Posterior vena cava (tissue), 2 donors: ENCODE measurements at regions of chr4 and their contacts with region 1.

Region 1: GRCh38 chr4:34091451-34091850 is 2152.9 kb downstream of the ARAP2 start:
- DNase-seq: no peak

Region 2: GRCh38 chr4:34138385-34138784 is 46.9 kb after region 1 on chr4:
- intact Hi-C with region 1: no loop called
- DNase-seq: no peak

Region 3: DNA sequence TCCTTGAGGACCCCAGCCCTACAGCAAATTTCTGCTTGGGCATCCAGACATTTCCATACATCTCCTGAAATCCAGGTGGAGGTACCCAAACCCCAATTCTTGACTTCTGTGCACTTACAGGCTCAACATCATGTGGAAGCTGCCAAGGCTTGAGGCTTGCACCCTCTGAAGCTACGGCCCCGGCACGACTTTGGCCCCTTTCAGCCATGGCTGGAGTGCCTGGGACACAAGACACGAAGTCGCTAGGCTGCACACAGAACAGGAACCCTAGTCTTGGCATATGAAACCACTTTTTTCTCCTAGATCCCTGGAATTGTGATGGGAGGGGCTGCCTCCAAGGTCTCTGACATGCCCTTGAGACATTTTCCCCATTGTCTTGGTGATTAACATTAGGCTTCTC is 735.2 kb after region 1 on chr4:
- intact Hi-C with region 1: loop called in 1 of 2 experiments (anchors 10 kb)
- DNase-seq: no peak